H1 (cell line): ENCODE measurements at regions of chr2 and their contacts with region 1.

Region 1: GRCh38 chr2:64330281-64331113 is 123.5 kb upstream of the LGALSL start:
- DNase-seq: peak; percentile 54 to 87
- H3K4me3 ChIP-seq: no peak overlapping the region
- H3K27ac ChIP-seq: no peak overlapping the region
- H3K4me1 ChIP-seq: peaks cover 3 to 21% (median 11%) of the 10 kb centered on the region in 4 experiments; a peak in 6 of 7 replicates
- H3K27me3 ChIP-seq: no peaks in the 10 kb centered on the region
- CTCF ChIP-seq: peak; percentile 63 to 92 (median 86)
- EP300 ChIP-seq: no peak
- POLR2A ChIP-seq: no peak
- RAD21 ChIP-seq: peak; percentile 98

Region 2: GRCh38 chr2:63432373-63432772 is 898.1 kb before region 1 on chr2:
- CTCF ChIA-PET with region 1: no interaction called
- POLR2A ChIA-PET with region 1: no interaction called
- DNase-seq: no peak
- H3K4me3 ChIP-seq: no peak overlapping the region
- H3K27ac ChIP-seq: no peak overlapping the region; the same call in 1 of the 2 replicates
- H3K4me1 ChIP-seq: no peaks in the 10 kb centered on the region
- H3K27me3 ChIP-seq: no peaks in the 10 kb centered on the region
- CTCF ChIP-seq: no peak
- EP300 ChIP-seq: no peak
- POLR2A ChIP-seq: no peak
- RAD21 ChIP-seq: no peak

Region 3: GRCh38 chr2:64173156-64174135 is 157.1 kb before region 1 on chr2:
- CTCF ChIA-PET with region 1: no interaction called
- POLR2A ChIA-PET with region 1: no interaction called
- DNase-seq: no peak
- H3K4me3 ChIP-seq: no peak overlapping the region
- H3K27ac ChIP-seq: no peak overlapping the region
- H3K4me1 ChIP-seq: peaks cover 0 to 5% (median 2%) of the 10 kb centered on the region in 4 experiments; a peak in 2 of 7 replicates
- H3K27me3 ChIP-seq: peaks cover 0 to 1% (median 0%) of the 10 kb centered on the region in 4 experiments; a peak in 1 of 7 replicates
- CTCF ChIP-seq: no peak
- EP300 ChIP-seq: no peak
- POLR2A ChIP-seq: no peak
- RAD21 ChIP-seq: no peak

Region 4: GRCh38 chr2:64250751-64251403 is 79.6 kb before region 1 on chr2:
- CTCF ChIA-PET with region 1: interaction called, 12 read pairs
- POLR2A ChIA-PET with region 1: interaction called, 5 read pairs
- DNase-seq: no peak
- H3K4me3 ChIP-seq: peak overlapping the region; percentile 4 to 63 (median 41); a peak in 4 of 8 replicates
- H3K27ac ChIP-seq: peak overlapping the region; percentile 53
- H3K4me1 ChIP-seq: peaks cover 3 to 29% (median 23%) of the 10 kb centered on the region in 4 experiments; a peak in 6 of 7 replicates
- H3K27me3 ChIP-seq: no peaks in the 10 kb centered on the region
- CTCF ChIP-seq: no peak
- EP300 ChIP-seq: no peak
- POLR2A ChIP-seq: no peak
- RAD21 ChIP-seq: no peak

Region 5: GRCh38 chr2:64318476-64318748 is 12.1 kb before region 1 on chr2:
- CTCF ChIA-PET with region 1: interaction called, 63 read pairs
- POLR2A ChIA-PET with region 1: interaction called, 7 read pairs
- DNase-seq: no peak
- H3K4me3 ChIP-seq: no peak overlapping the region
- H3K27ac ChIP-seq: no peak overlapping the region
- H3K4me1 ChIP-seq: peaks cover 0 to 4% (median 0%) of the 10 kb centered on the region in 4 experiments; a peak in 3 of 7 replicates
- H3K27me3 ChIP-seq: peaks cover 0 to 3% (median 0%) of the 10 kb centered on the region in 4 experiments; a peak in 1 of 7 replicates
- CTCF ChIP-seq: no peak
- EP300 ChIP-seq: no peak
- POLR2A ChIP-seq: no peak
- RAD21 ChIP-seq: no peak

Region 6: DNA sequence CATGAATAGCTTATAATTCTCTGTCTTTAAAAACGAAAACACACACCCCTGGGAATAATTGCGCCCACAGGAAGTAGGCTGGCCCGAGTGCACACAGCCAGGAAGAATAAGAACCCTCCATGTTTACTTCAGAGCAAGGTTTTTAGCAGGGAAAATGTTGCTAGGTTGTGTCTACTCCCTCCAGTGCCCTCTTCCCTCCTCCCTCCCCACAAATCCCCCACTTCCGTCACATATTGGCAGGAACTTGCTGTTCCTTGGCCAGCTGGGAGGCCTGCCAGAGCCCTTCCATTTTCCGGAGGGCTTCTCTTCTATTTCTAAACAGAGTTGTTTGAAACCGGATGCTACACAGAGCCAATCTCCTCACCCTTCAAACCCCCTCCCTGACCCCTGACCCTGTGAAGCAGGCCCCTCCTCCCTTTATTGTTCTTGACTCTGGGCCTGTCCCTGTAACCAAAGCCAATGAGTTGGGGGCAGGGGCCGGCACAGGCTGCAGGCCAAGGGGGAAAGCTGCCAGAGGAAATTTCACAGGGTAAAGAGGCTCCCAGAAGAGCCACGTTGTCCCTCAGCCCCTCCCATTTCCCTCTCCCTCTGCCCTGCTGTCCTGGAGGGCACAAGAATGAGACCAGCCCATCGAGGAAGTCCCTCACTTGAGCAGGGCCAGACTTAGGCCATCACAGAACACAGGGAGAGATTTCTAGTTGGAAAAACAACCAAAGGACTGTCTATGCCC is 73.7 kb after region 1 on chr2:
- CTCF ChIA-PET with region 1: interaction called, 10 read pairs
- POLR2A ChIA-PET with region 1: no interaction called
- DNase-seq: peak; percentile 54 to 76
- H3K4me3 ChIP-seq: peak overlapping the region in 3 of 4 experiments; percentile 16 to 51 (median 34); a peak in 5 of 8 replicates
- H3K27ac ChIP-seq: peak overlapping the region; percentile 78
- H3K4me1 ChIP-seq: peaks cover 18 to 35% (median 25%) of the 10 kb centered on the region in 4 experiments
- H3K27me3 ChIP-seq: no peaks in the 10 kb centered on the region
- CTCF ChIP-seq: no peak
- EP300 ChIP-seq: no peak
- POLR2A ChIP-seq: peak in 1 of 2 experiments; percentile 33; a peak in 1 of 3 replicates
- RAD21 ChIP-seq: no peak

Region 7: DNA sequence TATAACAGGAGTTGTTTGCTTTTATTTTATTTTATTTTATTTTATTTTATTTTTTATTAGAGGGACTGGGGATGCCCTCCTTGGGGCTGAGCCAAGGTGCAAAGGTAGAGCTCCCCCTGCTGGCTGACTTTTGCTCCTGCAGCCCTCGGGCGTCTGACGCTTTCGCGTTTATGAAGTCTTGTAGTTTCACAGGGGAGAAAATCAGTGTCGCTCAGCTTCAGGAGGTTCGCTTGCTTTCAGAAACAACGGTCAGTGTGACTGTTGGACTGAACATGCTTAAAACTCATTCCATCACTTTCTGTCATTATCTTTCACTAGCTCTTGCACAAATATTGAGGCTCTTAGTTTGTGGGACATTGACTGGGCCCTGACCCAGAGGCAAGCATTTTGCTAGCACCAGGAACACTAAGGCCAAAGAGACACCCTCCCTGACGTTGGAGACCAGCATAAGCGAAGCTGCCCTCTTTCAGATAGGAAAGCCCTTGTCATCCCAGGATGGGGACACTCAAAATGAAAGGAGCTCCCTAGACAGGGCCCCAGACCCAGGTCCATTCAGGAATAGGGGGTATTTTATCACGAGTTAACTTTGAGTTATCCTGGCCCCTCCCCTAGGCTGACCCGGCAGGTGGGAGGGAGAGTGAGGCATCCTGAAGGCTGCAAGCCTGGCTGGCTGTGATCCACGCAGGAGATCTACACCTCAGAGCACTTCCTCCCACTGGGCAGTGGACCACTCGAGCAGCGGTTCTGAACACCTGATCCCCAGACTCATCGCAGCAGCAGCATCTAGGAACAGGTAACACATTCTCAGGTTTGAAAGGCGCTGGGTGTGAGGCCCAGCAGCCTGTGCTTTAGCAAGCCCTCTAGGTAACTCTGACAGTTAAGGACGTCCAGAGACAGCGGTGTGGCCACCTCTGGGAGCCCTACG is 157.8 kb after region 1 on chr2:
- CTCF ChIA-PET with region 1: interaction called, 214 read pairs
- POLR2A ChIA-PET with region 1: interaction called, 5 read pairs
- DNase-seq: peak; percentile 58 to 97
- H3K4me3 ChIP-seq: no peak overlapping the region
- H3K27ac ChIP-seq: no peak overlapping the region
- H3K4me1 ChIP-seq: peaks cover 5 to 12% (median 10%) of the 10 kb centered on the region in 4 experiments
- H3K27me3 ChIP-seq: peaks cover 0 to 3% (median 0%) of the 10 kb centered on the region in 4 experiments; a peak in 1 of 7 replicates
- CTCF ChIP-seq: peak; percentile 86
- EP300 ChIP-seq: no peak
- POLR2A ChIP-seq: no peak
- RAD21 ChIP-seq: peak; percentile 81 to 87

Region 8: DNA sequence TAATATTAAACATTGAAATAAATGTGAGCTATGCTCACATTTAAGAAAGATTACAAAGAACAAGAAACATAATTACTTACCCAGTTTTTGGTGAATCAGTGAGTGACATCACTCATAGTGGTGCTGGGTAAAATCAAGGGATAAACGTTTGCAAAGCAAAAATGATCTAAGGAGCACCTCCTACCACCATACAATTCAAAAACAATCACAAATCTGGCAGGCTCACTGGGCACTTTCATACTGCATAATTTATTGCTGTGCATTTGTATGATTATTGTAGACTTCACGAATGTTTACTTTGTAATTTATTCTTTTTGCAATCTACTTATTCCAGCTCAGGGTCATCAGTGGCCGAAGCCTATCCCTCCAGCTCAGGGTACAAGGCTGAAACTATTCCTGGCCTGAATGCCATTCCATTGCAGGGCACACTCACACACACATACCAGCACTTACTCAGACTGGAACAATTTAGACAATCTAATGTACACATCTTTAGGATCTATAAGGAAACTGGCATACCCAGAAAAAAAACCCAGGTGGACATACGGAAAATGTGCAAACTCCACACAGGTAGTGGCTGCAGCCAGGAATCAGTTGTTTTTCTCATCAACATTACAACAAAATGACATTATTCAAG is 228.1 kb after region 1 on chr2:
- CTCF ChIA-PET with region 1: interaction called, 17 read pairs
- POLR2A ChIA-PET with region 1: no interaction called
- DNase-seq: no peak
- H3K4me3 ChIP-seq: no peak overlapping the region
- H3K27ac ChIP-seq: no peak overlapping the region
- H3K4me1 ChIP-seq: peaks cover 0 to 3% (median 1%) of the 10 kb centered on the region in 4 experiments; a peak in 2 of 7 replicates
- H3K27me3 ChIP-seq: no peaks in the 10 kb centered on the region
- CTCF ChIP-seq: no peak
- EP300 ChIP-seq: no peak
- POLR2A ChIP-seq: no peak
- RAD21 ChIP-seq: no peak